Activated CD4-positive, alpha-beta T cell treated with anti-CD3 and anti-CD28 coated beads for 36 hours (primary cell): ENCODE measurements at regions of chrX and their contacts with region 1.

Region 1: GRCh38 chrX:20515841-20516461 is 249.2 kb upstream of the RPS6KA3 start:
- DNase-seq: peak; percentile 47
- ATAC-seq: peak; percentile 85
- H3K4me3 Mint-ChIP-seq: no peak overlapping the region
- H3K27ac Mint-ChIP-seq: peak overlapping the region; percentile 42
- H3K4me1 Mint-ChIP-seq: peaks cover 30% of the 10 kb centered on the region
- H3K27me3 Mint-ChIP-seq: peaks cover 25% of the 10 kb centered on the region

Region 2: GRCh38 chrX:20266810-20267606 is 248.9 kb before region 1 on chrX and contains the start of gene RPS6KA3:
- CTCF ChIA-PET with region 1: no interaction called
- POLR2A ChIA-PET with region 1: no interaction called
- intact Hi-C with region 1: loop called (anchors 5 to 10 kb)
- DNase-seq: peak; percentile 94
- ATAC-seq: peak; percentile 83
- H3K4me3 Mint-ChIP-seq: peak within 1 kb of the TSS; percentile 82
- H3K27ac Mint-ChIP-seq: peak within 1 kb of the TSS; percentile 91
- H3K4me1 Mint-ChIP-seq: peaks cover 18% of the 10 kb centered on the region
- H3K27me3 Mint-ChIP-seq: no peaks in the 10 kb centered on the region
- total RNA-seq, gene RPS6KA3: 40.7 to 41.5 TPM

Region 3: GRCh38 chrX:20285513-20285912 is 230.4 kb before region 1 on chrX:
- CTCF ChIA-PET with region 1: no interaction called
- POLR2A ChIA-PET with region 1: no interaction called
- intact Hi-C with region 1: no loop called
- DNase-seq: no peak
- ATAC-seq: no peak
- H3K4me3 Mint-ChIP-seq: no peak overlapping the region
- H3K27ac Mint-ChIP-seq: no peak overlapping the region
- H3K4me1 Mint-ChIP-seq: no peaks in the 10 kb centered on the region
- H3K27me3 Mint-ChIP-seq: no peaks in the 10 kb centered on the region

Region 4: GRCh38 chrX:20382518-20383297 is 133.2 kb before region 1 on chrX:
- CTCF ChIA-PET with region 1: no interaction called
- POLR2A ChIA-PET with region 1: interaction called, 3 read pairs
- intact Hi-C with region 1: loop called in 1 of 2 experiments (anchors 1 kb)
- DNase-seq: peak; percentile 49
- ATAC-seq: peak; percentile 59
- H3K4me3 Mint-ChIP-seq: no peak overlapping the region
- H3K27ac Mint-ChIP-seq: no peak overlapping the region
- H3K4me1 Mint-ChIP-seq: peaks cover 22% of the 10 kb centered on the region
- H3K27me3 Mint-ChIP-seq: no peaks in the 10 kb centered on the region

Region 5: GRCh38 chrX:20477836-20478524 is 38.0 kb before region 1 on chrX:
- CTCF ChIA-PET with region 1: no interaction called
- POLR2A ChIA-PET with region 1: no interaction called
- intact Hi-C with region 1: no loop called
- DNase-seq: no peak
- ATAC-seq: no peak
- H3K4me3 Mint-ChIP-seq: no peak overlapping the region
- H3K27ac Mint-ChIP-seq: no peak overlapping the region
- H3K4me1 Mint-ChIP-seq: no peaks in the 10 kb centered on the region
- H3K27me3 Mint-ChIP-seq: no peaks in the 10 kb centered on the region

Region 6: DNA sequence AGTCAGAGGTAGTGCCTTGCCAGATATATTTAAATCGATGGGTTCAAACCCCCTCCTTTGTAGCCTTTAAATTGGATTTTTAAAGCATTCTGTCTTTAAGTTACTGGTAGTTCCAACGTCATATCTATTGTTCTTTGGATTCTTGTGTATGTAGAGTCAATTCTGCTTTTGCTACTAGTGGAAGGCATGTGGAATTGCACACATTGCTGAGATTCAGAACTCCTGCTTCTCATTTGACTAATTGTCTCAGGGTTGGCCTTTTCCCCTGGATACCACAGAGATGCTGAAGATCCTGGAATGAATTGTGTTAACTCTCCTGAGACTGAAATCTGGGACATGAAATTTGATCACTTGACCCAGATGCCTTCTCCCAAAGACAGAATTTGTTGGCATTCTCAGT is 79.0 kb after region 1 on chrX:
- CTCF ChIA-PET with region 1: interaction called, 7 read pairs
- POLR2A ChIA-PET with region 1: no interaction called
- intact Hi-C with region 1: loop called in 1 of 2 experiments (anchors 1 kb)
- DNase-seq: no peak
- ATAC-seq: no peak
- H3K4me3 Mint-ChIP-seq: no peak overlapping the region
- H3K27ac Mint-ChIP-seq: no peak overlapping the region
- H3K4me1 Mint-ChIP-seq: peaks cover 23% of the 10 kb centered on the region
- H3K27me3 Mint-ChIP-seq: peaks cover 6% of the 10 kb centered on the region

Region 7: DNA sequence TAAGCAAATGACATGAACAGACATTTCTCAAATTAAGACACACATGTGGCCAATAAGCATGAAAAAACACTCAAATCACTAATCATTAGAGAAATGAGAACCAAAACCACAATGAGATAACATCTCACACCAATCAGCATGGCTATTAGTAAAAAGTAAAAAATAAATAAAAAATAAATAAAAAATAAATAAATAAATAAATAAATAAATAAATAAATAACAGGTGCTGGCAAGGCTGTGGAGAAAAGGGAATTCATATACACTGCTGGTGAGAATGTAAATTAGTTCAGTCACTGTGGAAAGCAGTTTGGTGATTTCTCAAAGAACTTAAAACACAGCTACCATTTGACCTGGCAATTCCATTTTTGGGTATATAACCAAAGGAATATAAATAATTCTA is 691.1 kb after region 1 on chrX:
- CTCF ChIA-PET with region 1: no interaction called
- POLR2A ChIA-PET with region 1: no interaction called
- intact Hi-C with region 1: no loop called
- DNase-seq: no peak
- ATAC-seq: no peak
- H3K4me3 Mint-ChIP-seq: no peak overlapping the region
- H3K27ac Mint-ChIP-seq: no peak overlapping the region
- H3K4me1 Mint-ChIP-seq: no peaks in the 10 kb centered on the region
- H3K27me3 Mint-ChIP-seq: no peaks in the 10 kb centered on the region